ENCODE measurements at regions of chr19 and their contacts with region 1.

Region 1: GRCh38 chr19:58346961-58347931 is 6.0 kb downstream of the A1BG start:
- DNase-seq: peak; percentile 81 to 99 (median 96)
- ATAC-seq: peak; percentile 100
- H3K4me3 ChIP-seq: peak overlapping the region; percentile 78
- H3K27ac ChIP-seq: peak overlapping the region; percentile 51; the same call in 1 of the 3 replicates
- H3K4me1 ChIP-seq: peaks cover 5 to 14% of the 10 kb centered on the region in 2 experiments; a peak in 4 of 5 replicates
- H3K27me3 ChIP-seq: no peaks in the 10 kb centered on the region
- CTCF ChIP-seq: 0 out of 6 replicates have a peak, but pooled peaks of 1 of the 3 experiments have one; percentile 6
- EP300 ChIP-seq: no peak
- POLR2A ChIP-seq: peak; percentile 44; the same call in 1 of the 2 replicates
- RAD21 ChIP-seq: no peak; a peak in 1 of 4 replicates

Region 2: DNA sequence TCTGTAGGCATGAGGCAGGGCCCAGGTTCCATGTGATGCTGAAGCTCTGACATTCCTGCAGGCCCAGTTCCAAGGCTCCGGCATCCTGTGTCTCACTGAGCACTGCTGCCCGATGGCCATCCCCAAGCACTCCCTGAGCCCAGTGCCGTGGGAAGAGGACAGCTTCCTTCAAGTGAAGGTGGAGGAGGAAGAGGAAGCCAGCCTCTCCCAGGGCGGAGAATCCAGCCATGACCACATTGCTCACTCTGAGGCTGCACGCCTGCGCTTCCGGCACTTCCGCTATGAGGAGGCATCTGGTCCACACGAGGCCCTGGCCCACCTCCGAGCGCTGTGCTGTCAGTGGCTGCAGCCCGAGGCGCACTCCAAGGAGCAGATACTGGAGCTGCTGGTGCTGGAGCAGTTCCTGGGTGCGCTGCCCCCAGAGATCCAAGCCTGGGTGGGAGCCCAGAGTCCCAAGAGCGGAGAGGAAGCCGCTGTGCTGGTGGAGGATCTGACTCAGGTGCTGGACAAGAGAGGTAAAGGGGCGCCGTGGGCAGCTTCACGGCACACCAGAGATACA is 12.5 kb before region 1 on chr19:
- CTCF ChIA-PET with region 1: no interaction called
- POLR2A ChIA-PET with region 1: interaction called, 11 read pairs
- in situ Hi-C with region 1: no loop called
- intact Hi-C with region 1: no loop called
- DNase-seq: no peak
- ATAC-seq: no peak
- H3K4me3 ChIP-seq: no peak overlapping the region
- H3K27ac ChIP-seq: no peak overlapping the region
- H3K4me1 ChIP-seq: peaks cover 9 to 19% of the 10 kb centered on the region in 2 experiments; a peak in 4 of 5 replicates
- H3K27me3 ChIP-seq: no peaks in the 10 kb centered on the region
- CTCF ChIP-seq: no peak
- EP300 ChIP-seq: no peak
- POLR2A ChIP-seq: no peak
- RAD21 ChIP-seq: no peak

Region 3: DNA sequence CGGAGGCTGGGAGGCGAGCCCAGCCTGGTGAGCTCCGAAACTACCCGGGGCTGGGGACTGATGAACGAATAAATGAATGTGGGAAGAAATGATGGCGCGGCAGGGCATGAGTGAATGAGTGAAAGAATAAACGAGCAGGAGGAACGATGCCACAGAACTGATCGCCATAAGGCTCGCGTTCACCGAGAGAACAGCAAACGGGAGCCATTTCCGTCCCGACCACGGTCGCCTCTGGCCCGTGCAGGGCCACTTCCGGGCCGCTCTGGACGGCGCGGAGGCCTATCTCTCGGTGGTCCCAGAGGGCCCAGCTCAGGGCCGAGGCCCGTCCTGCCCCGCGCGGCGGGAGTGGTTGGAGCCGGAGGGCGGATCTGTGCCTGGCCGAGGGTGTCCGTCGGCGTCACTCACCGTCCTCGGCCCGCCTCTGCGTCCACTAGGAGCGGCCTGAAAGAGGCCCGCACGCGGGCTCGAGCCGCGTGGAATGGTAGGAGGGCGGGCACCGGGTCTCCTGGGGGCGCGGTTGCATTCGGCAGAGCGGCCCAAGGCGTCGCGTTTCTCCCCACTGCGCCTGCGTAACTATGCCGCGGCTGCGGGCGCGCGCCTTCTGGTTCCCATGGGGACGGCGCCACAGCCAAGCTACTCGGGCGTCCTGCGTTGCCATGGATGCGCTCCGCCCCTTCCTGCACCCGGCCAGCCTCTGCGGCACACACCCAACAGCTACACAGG is 15.2 kb after region 1 on chr19 and contains the start of gene ZNF497:
- CTCF ChIA-PET with region 1: no interaction called
- POLR2A ChIA-PET with region 1: interaction called, 20 read pairs
- in situ Hi-C with region 1: no loop called
- intact Hi-C with region 1: no loop called
- DNase-seq: peak; percentile 98
- ATAC-seq: peak; percentile 98
- H3K4me3 ChIP-seq: peak within 1 kb of the TSS; percentile 65
- H3K27ac ChIP-seq: peak within 1 kb of the TSS; percentile 97
- H3K4me1 ChIP-seq: peaks cover 7 to 38% of the 10 kb centered on the region in 2 experiments; a peak in 3 of 5 replicates
- H3K27me3 ChIP-seq: no peaks in the 10 kb centered on the region
- CTCF ChIP-seq: no peak
- EP300 ChIP-seq: no peak
- POLR2A ChIP-seq: peak; percentile 95
- RAD21 ChIP-seq: no peak; a peak in 1 of 4 replicates
- polyA plus RNA-seq, gene ZNF497: 0.06 TPM in 1 of 2 experiments, not detected in the other

Region 4: GRCh38 chr19:58439576-58440554 is 92.6 kb after region 1 on chr19 and contains the start of gene ZNF132:
- CTCF ChIA-PET with region 1: no interaction called
- POLR2A ChIA-PET with region 1: no interaction called
- in situ Hi-C with region 1: no loop called
- intact Hi-C with region 1: no loop called
- DNase-seq: no peak
- ATAC-seq: no peak
- H3K4me3 ChIP-seq: no peak within 1 kb of the TSS
- H3K27ac ChIP-seq: no peak within 1 kb of the TSS
- H3K4me1 ChIP-seq: peaks cover 0 to 12% of the 10 kb centered on the region in 2 experiments; a peak in 1 of 5 replicates
- H3K27me3 ChIP-seq: no peaks in the 10 kb centered on the region
- CTCF ChIP-seq: no peak
- EP300 ChIP-seq: no peak
- POLR2A ChIP-seq: no peak
- RAD21 ChIP-seq: no peak
- polyA plus RNA-seq, gene ZNF132: 0.14 to 0.42 TPM

Measured in K562 (cell line).